Posterior vena cava (tissue), 2 donors: ENCODE measurements at regions of chr16 and their contacts with region 1.

Region 1: DNA sequence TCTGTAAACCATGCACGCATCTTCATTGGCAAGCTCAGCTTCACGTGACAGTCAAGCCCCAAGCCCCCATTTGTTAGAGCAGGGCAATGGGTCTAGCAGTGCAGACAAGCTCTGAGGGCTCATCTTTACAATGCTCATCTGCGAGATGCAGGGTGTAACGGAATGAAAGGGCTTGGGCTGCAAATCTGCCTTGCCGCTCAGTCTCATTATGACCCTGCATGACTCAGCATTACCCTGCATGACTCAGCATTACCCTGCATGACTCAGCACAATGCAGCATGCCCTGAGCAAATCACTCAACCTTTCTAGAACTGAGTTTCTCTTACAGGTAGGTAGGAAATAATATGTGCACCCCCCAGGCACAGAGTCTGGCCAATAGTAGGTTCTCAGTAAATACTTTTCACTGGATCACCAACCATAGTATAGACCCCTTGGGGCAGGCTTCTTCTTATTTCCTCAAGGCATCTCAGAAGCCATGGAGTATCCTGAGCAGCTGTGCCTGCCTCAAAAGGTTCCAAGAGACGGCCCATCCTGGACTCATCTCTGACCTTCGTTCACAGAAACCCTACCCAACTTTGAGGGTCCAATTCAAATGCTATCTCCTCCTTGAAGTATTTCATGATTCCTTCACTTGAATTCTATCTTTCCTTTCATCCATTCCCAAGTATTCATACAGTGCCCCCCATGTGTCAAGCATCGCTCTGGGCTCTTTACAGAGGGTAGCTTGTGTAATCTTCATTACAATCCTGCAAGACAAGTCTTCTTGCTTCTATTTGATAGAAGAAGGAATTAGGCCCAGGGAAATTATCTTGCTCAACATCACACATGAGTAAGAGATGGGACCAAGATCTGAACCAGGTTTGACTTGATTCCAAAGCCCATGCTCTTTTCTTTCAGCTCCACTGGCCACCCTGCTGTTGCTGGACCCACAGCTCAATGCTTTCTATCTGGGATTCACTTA is 391.2 kb upstream of the CDH5 start:
- DNase-seq: no peak

Region 2: DNA sequence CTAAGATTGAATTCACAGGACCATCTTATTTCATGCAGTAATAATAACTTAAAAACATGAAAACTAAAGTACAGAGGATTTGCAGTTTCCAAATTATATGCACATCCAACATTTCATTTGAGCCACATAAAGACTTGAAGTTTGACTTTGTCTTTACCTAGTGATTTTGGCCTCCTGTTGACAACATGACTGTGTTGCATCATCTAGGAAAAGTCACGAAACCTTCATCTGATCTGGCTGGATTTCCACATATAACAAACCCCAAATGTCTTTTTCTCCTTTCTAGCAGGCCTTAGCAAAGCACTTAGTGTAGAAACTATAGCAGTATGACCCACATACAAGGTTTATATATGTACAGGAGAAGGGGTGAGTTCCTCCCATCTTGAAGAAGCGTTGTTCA is 15.3 kb before region 1 on chr16:
- intact Hi-C with region 1: loop called in 1 of 2 experiments (anchors 1 kb)
- DNase-seq: no peak

Region 3: DNA sequence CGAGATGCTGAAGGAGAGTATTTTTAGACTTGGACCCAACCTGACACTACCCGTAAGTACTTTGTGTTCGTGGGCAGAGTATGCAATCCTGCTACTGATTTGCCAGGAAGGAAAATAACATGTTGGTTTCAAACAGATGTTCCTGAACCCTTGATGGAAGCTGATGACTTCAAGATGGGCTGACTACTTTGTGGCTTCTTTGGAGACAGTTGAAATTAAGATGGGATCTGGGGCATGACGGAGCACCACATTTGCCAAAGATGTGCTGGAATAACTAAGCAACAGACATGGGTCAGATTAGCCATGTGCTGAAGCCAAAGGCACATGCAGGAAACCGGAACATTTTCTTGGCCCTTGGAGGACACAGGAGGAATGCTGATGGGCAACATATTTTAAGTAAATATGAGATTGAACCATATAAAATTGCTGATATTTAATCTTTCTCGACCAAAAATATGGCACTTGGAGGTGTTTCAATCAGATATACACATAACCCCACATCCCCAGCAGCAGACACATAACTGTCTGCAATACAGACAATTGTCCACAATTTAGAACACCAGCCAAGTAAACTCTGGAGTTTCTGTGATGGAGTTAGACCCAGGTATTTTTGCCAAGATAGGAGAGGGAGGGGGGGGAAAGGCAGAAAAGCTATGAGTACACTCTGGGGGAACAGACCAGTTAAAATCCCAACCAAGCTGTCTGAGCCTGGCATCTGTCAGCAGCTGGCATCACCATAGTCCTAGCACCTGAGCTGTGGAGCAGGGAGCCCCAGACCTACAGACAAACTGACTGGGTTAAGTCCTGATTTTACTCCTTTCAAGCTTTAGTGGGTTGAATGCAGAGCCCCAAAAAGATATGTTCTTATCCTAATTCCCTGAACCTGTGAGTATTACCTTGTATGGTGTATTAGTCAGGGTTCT is 61.7 kb after region 1 on chr16:
- intact Hi-C with region 1: no loop called
- DNase-seq: no peak